Mucosa of descending colon (tissue), 3 donors: ENCODE measurements at regions of chr4 and their contacts with region 1.

Region 1: GRCh38 chr4:55321707-55322264 is 24.3 kb upstream of the SRD5A3 start:
- DNase-seq: peak in 1 of 3 donors; percentile 92
- ATAC-seq: peak; percentile 41
- H3K4me3 ChIP-seq: no peak overlapping the region
- H3K4me1 ChIP-seq: peaks cover 6% of the 10 kb centered on the region
- CTCF ChIP-seq: no peak

Region 2: GRCh38 chr4:54971474-54971950 is 350.3 kb before region 1 on chr4:
- intact Hi-C with region 1: loop called in 1 of 2 experiments (anchors 10 kb)
- DNase-seq: peak in 1 of 3 donors; percentile 7
- ATAC-seq: no peak
- H3K4me3 ChIP-seq: no peak overlapping the region
- H3K4me1 ChIP-seq: no peaks in the 10 kb centered on the region
- CTCF ChIP-seq: no peak